OCI-LY7 (cell line): ENCODE measurements at regions of chr2 and their contacts with region 1.

Region 1: DNA sequence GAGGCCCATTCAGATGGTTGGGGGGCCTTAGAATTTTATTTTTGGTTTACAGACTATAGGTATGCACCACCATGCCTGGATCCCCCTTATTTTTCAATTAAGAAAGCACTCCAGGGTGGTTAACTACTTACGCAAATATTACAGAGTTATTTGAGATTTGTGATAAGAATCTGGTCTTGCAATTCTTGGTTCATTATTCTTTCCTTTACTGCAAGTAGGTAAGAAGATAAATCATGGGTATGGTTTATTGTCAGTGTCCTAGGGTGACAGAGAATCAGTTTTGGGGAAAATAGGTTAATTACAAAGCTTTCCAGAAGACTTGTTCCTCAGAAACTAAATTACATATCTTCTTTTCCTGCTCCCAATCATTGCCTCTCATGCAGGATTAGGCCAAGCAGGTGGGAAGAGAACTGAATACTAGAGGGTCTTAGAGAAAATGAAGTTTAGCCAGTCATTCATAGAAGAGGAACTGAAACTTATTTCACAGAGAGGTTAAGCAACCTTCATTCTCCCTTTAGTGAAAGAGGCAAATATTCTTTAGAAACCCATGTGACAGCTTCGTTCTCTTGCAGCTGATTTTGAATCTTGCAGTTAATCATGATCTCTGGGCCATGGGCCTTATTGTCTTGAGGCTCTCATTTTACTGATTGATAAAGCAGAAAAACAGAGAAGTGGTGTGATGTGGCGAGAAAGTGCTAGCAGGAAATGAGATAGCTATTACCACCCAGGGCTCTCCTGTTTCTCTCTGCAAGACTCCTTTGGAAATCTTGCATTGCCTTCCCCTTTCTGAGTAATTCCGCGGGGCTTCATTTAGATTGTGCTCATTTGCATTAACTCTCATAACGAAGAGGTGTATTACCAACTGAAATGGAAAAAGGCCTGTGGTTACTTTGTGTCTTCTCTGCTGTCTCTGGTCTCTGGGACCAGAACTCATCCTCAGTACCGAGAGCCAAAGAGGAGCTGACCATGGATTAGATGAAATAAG is 44.8 kb upstream of the ARHGAP25 start:
- DNase-seq: peak; percentile 92
- H3K4me3 ChIP-seq: peak overlapping the region; percentile 61
- H3K27ac ChIP-seq: peak overlapping the region; percentile 98
- H3K4me1 ChIP-seq: peaks cover 61% of the 10 kb centered on the region
- CTCF ChIP-seq: no peak

Region 2: DNA sequence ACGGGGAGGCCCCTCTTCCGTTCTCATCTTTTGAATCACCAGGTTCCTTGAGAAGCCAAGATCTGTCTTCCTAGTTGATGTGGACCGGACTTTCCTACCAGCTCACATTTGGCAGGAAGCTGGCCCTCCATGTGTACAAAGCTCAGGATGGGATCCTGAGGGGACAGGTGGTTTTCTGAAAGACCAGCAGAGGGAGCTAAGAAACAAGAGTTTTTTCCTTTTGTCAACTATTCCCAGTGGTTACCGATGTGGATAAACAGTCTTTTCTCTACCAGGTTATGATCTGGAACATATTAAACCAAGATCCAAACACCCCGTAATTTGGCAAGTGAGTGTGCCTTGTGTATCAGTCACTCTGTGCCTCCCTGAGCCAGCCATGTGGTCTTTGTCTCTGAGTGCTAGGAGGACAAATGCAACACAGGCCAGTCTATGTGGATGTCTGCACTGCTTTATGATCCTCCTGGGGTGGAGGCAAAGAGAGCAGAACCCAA is 19.6 kb after region 1 on chr2:
- CTCF ChIA-PET with region 1: interaction called, 4 read pairs
- POLR2A ChIA-PET with region 1: interaction called, 13 read pairs
- intact Hi-C with region 1: no loop called
- DNase-seq: peak; percentile 73
- H3K4me3 ChIP-seq: no peak overlapping the region
- H3K27ac ChIP-seq: no peak overlapping the region
- H3K4me1 ChIP-seq: peaks cover 21% of the 10 kb centered on the region
- CTCF ChIP-seq: peak; percentile 98

Region 3: GRCh38 chr2:68721482-68722101 is 31.7 kb after region 1 on chr2:
- CTCF ChIA-PET with region 1: no interaction called
- POLR2A ChIA-PET with region 1: interaction called, 11 read pairs
- intact Hi-C with region 1: loop called (anchors 2 kb)
- DNase-seq: peak; percentile 73
- H3K4me3 ChIP-seq: peak overlapping the region; percentile 32
- H3K27ac ChIP-seq: peak overlapping the region; percentile 59
- H3K4me1 ChIP-seq: peaks cover 60% of the 10 kb centered on the region
- CTCF ChIP-seq: no peak

Region 4: GRCh38 chr2:68726608-68727367 is 36.9 kb after region 1 on chr2:
- CTCF ChIA-PET with region 1: no interaction called
- POLR2A ChIA-PET with region 1: interaction called, 11 read pairs
- intact Hi-C with region 1: loop called (anchors 2 kb)
- DNase-seq: peak; percentile 94
- H3K4me3 ChIP-seq: peak overlapping the region; percentile 39
- H3K27ac ChIP-seq: peak overlapping the region; percentile 66
- H3K4me1 ChIP-seq: peaks cover 68% of the 10 kb centered on the region
- CTCF ChIP-seq: no peak